ENCODE measurements at regions of chr14 and their contacts with region 1.

Region 1: DNA sequence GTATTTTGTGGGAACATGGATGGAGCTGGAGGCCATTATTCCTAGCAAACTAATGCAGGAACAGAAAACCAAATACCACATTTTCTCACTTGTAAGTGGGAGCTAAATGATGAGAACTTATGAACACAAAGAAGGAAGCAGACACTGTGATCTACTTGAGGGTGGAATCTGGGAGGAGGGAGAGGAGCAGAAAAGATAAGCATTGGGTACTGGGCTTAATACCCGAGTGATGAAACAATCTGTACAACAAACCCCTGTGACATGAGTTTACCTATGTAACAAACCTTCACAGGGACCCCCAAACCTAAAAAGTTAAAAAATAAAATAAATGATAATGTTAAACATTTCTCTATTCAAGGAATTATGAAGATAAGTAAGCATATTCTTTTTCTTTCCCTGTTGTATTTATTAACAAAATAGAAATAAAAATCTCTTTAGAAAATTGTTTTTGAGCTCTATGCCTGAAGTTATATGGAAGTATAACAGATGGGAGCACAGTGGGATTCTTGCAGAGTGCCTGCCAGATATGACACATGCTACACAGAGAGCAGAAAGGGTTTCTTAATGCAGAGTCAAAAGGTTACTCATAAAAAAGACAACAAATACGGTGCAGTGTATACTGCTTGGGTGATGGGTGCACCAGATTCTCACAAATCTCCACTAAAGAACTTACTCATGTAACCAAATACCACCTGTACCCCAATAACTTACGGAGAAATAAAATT is 52.0 kb upstream of the SYNE2 start:
- DNase-seq: no peak
- H3K4me3 ChIP-seq: no peak overlapping the region
- H3K4me3 Mint-ChIP-seq: no peak overlapping the region
- H3K27ac ChIP-seq: no peak overlapping the region
- H3K27ac Mint-ChIP-seq: no peak overlapping the region
- H3K4me1 ChIP-seq: no peaks in the 10 kb centered on the region
- H3K4me1 Mint-ChIP-seq: peaks cover 4 to 10% (median 5%) of the 10 kb centered on the region in 4 donors
- H3K27me3 ChIP-seq: no peaks in the 10 kb centered on the region
- H3K27me3 Mint-ChIP-seq: peaks cover 0 to 1% of the 10 kb centered on the region in 2 donors

Region 2: GRCh38 chr14:63342371-63342770 is 458.4 kb before region 1 on chr14:
- CTCF ChIA-PET with region 1: no interaction called
- POLR2A ChIA-PET with region 1: no interaction called
- intact Hi-C with region 1: no loop called
- DNase-seq: no peak
- H3K4me3 ChIP-seq: no peak overlapping the region
- H3K4me3 Mint-ChIP-seq: no peak overlapping the region
- H3K27ac ChIP-seq: no peak overlapping the region
- H3K27ac Mint-ChIP-seq: peak overlapping the region in 1 of 7 donors; percentile 46
- H3K4me1 ChIP-seq: no peaks in the 10 kb centered on the region
- H3K4me1 Mint-ChIP-seq: no peaks in the 10 kb centered on the region
- H3K27me3 ChIP-seq: peaks cover 3% of the 10 kb centered on the region
- H3K27me3 Mint-ChIP-seq: peaks cover 20 to 30% of the 10 kb centered on the region in 2 donors

Region 3: GRCh38 chr14:63993992-63994391 is 193.2 kb after region 1 on chr14:
- CTCF ChIA-PET with region 1: interaction called, 7 read pairs
- POLR2A ChIA-PET with region 1: no interaction called
- intact Hi-C with region 1: loop called (anchors 1 kb)
- DNase-seq: peak in 2 of 5 donors; percentile 10 to 11
- H3K4me3 ChIP-seq: no peak overlapping the region
- H3K4me3 Mint-ChIP-seq: no peak overlapping the region
- H3K27ac ChIP-seq: no peak overlapping the region
- H3K27ac Mint-ChIP-seq: peak overlapping the region in 1 of 7 donors; percentile 62
- H3K4me1 ChIP-seq: no peaks in the 10 kb centered on the region
- H3K4me1 Mint-ChIP-seq: peaks cover 0 to 4% (median 1%) of the 10 kb centered on the region in 4 donors
- H3K27me3 ChIP-seq: no peaks in the 10 kb centered on the region
- H3K27me3 Mint-ChIP-seq: no peaks in the 10 kb centered on the region

Region 4: GRCh38 chr14:64294672-64295413 is 494.0 kb after region 1 on chr14:
- CTCF ChIA-PET with region 1: interaction called, 12 read pairs
- POLR2A ChIA-PET with region 1: no interaction called
- intact Hi-C with region 1: loop called (anchors 1 kb)
- DNase-seq: peak; percentile 75 to 80 (median 76)
- H3K4me3 ChIP-seq: peak overlapping the region; percentile 49 to 62
- H3K4me3 Mint-ChIP-seq: peak overlapping the region; percentile 79 to 88 (median 82)
- H3K27ac ChIP-seq: no peak overlapping the region
- H3K27ac Mint-ChIP-seq: peak overlapping the region in 3 of 7 donors; percentile 25 to 45 (median 27)
- H3K4me1 ChIP-seq: peaks cover 19% of the 10 kb centered on the region
- H3K4me1 Mint-ChIP-seq: peaks cover 4 to 24% (median 15%) of the 10 kb centered on the region in 4 donors
- H3K27me3 ChIP-seq: peaks cover 5% of the 10 kb centered on the region
- H3K27me3 Mint-ChIP-seq: peaks cover 6 to 9% of the 10 kb centered on the region in 2 donors

Region 5: GRCh38 chr14:64303471-64303917 is 502.7 kb after region 1 on chr14:
- CTCF ChIA-PET with region 1: interaction called, 40 read pairs
- POLR2A ChIA-PET with region 1: no interaction called
- intact Hi-C with region 1: loop called (anchors 1 kb)
- DNase-seq: peak in 4 of 5 donors; percentile 44 to 58 (median 50)
- H3K4me3 ChIP-seq: no peak overlapping the region
- H3K4me3 Mint-ChIP-seq: no peak overlapping the region
- H3K27ac ChIP-seq: no peak overlapping the region
- H3K27ac Mint-ChIP-seq: no peak overlapping the region
- H3K4me1 ChIP-seq: no peaks in the 10 kb centered on the region
- H3K4me1 Mint-ChIP-seq: peaks cover 0 to 4% (median 2%) of the 10 kb centered on the region in 4 donors
- H3K27me3 ChIP-seq: peaks cover 2% of the 10 kb centered on the region
- H3K27me3 Mint-ChIP-seq: peaks cover 0 to 3% of the 10 kb centered on the region in 2 donors

Measured in CD4-positive, alpha-beta memory T cell (primary cell).